Activated T-helper 1 cell treated with anti-CD3 and anti-CD28 coated beads, Interleukin-12 subunit alpha, Interleukin-12 subunit beta, Interleukin-2, Interleukin-4 antibody, amounts not matched to agents 30 ng/mL and 10 ng/mL and 1 ng/mL, durations not matched to agents 14 hours and 24 hours and 36 hours (primary cell): ENCODE measurements at regions of chr22 and their contacts with region 1.

Region 1: GRCh38 chr22:50244420-50245213 is at the start of gene TUBGCP6:
- DNase-seq: peak; percentile 93
- H3K4me3 Mint-ChIP-seq: peak within 1 kb of the TSS; percentile 99
- H3K27ac Mint-ChIP-seq: peak within 1 kb of the TSS; percentile 100
- H3K4me1 Mint-ChIP-seq: peaks cover 26% of the 10 kb centered on the region
- H3K27me3 Mint-ChIP-seq: peaks cover 2% of the 10 kb centered on the region
- total RNA-seq, gene TUBGCP6: 52.1 and 54.6 TPM in 2 replicates

Region 2: GRCh38 chr22:50200461-50201190 is 44.0 kb before region 1 on chr22 and contains the start of gene SELENOO:
- intact Hi-C with region 1: loop called (anchors 2 kb)
- DNase-seq: peak; percentile 90
- H3K4me3 Mint-ChIP-seq: peak within 1 kb of the TSS; percentile 88
- H3K27ac Mint-ChIP-seq: peak within 1 kb of the TSS; percentile 63
- H3K4me1 Mint-ChIP-seq: peaks cover 19% of the 10 kb centered on the region
- H3K27me3 Mint-ChIP-seq: no peaks in the 10 kb centered on the region
- total RNA-seq, gene SELENOO: 23.7 and 25.9 TPM in 2 replicates

Region 3: DNA sequence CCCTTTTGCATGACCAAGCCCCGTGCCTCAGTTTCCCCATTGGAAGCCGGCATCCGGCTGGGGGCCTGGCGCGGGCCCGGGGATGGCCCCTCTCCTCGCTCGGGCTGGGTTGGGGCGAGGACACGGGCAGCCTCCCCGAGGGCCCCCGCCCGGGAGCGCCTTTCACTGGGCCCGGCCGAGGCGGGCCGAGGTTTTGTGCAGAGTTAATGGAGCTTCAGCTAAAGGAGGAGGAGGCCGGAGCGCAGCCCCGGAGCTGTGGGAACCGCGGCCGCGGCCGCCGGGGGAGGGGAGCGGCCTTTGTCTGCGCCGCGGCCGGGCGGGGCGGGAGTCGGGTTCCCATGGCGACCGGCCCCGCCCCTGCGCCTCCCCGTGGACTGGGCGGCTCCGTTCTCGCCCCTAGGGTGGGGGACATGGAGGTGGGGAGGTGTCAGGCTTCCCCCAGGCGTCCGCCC is 26.9 kb after region 1 on chr22:
- intact Hi-C with region 1: loop called (anchors 1 kb)
- DNase-seq: peak; percentile 55
- H3K4me3 Mint-ChIP-seq: no peak overlapping the region
- H3K27ac Mint-ChIP-seq: no peak overlapping the region
- H3K4me1 Mint-ChIP-seq: peaks cover 10% of the 10 kb centered on the region
- H3K27me3 Mint-ChIP-seq: peaks cover 8% of the 10 kb centered on the region

Region 4: GRCh38 chr22:50326959-50327710 is 82.5 kb after region 1 on chr22 and contains the start of gene DENND6B:
- intact Hi-C with region 1: loop called (anchors 5 kb)
- DNase-seq: peak; percentile 68
- H3K4me3 Mint-ChIP-seq: peak within 1 kb of the TSS; percentile 86
- H3K27ac Mint-ChIP-seq: peak within 1 kb of the TSS; percentile 78
- H3K4me1 Mint-ChIP-seq: peaks cover 7% of the 10 kb centered on the region
- H3K27me3 Mint-ChIP-seq: peaks cover 21% of the 10 kb centered on the region
- total RNA-seq, gene DENND6B: 1.7 and 2.2 TPM in 2 replicates

Region 5: DNA sequence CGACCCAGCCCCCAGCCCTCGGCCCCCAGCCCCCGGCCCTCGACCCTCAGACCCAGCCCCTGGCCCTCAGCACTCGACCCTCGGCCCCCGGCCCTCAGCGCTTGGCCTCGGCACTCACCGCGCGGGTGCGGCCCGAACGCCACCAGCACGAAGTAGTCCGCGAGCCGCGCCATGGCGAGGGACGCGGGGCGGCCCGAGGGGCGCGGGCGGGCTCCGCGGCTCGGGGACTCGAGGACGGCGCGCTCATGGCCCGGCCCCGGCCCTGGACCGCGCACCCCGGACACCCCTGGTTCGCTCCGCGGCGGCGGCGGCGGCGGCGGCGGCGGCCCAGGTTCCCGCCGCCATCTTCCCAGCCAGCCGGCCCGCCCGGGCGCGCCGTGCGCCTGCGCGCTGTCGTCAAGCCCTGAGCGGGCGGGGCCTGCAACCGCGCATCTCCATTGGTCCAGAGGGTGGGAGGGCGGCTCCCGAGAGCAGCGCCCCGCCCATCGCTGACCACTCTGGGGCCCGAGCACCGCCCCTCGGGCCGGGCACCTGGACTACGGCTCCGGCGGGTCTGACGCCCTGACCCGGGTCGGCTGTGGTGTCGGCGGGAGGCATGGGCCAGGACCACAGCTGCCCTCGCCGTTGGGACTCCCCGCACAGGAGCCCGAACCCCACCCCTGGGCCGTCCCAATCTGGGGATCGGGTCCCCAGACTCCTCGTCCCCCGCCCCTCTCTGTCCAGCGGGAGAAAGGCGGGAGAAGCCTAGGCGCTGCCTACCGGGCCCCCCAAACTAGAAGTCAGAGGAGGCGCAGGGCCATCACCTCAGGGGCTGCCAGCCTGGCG is 230.3 kb after region 1 on chr22 and contains the start of gene SBF1:
- intact Hi-C with region 1: loop called (anchors 10 kb)
- DNase-seq: peak; percentile 87
- H3K4me3 Mint-ChIP-seq: peak within 1 kb of the TSS; percentile 87
- H3K27ac Mint-ChIP-seq: peak within 1 kb of the TSS; percentile 74
- H3K4me1 Mint-ChIP-seq: peaks cover 39% of the 10 kb centered on the region
- H3K27me3 Mint-ChIP-seq: peaks cover 12% of the 10 kb centered on the region
- total RNA-seq, gene SBF1: 113 and 116 TPM in 2 replicates

Region 6: DNA sequence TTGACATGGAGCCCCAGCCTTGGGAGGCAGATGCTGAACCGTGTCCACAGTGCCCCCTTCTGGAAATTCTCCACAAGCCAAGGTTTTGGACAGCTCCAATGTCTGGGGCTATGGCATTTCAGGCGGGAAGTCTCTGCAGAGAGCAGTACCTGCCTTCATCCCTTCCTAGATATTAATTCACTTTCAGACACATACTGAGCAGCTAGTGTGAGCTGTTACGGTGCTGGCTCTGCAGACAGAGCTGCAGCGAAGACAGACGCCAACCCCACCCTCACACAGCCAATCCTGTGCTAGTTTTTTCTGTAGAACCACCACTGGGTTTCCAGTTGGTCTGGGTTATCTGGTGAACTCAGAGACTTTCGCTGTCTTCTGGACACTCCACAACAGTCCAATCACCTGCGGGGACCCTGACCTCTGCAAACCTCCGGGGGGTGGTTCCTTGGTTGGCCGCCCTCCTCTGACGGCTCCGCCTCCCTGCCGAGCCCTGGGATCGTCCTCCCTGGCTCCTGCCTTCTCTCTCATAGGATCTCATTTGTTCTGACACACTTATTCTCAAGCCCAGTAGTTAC is 253.8 kb after region 1 on chr22:
- intact Hi-C with region 1: loop called (anchors 5 kb)
- DNase-seq: peak; percentile 61
- H3K4me3 Mint-ChIP-seq: no peak overlapping the region
- H3K27ac Mint-ChIP-seq: no peak overlapping the region
- H3K4me1 Mint-ChIP-seq: peaks cover 10% of the 10 kb centered on the region
- H3K27me3 Mint-ChIP-seq: peaks cover 10% of the 10 kb centered on the region